ENCODE measurements at regions of chr16 and their contacts with region 1.

Region 1: GRCh38 chr16:24010440-24011089 is 174.8 kb downstream of the PRKCB start:
- DNase-seq: peak; percentile 67 to 86 (median 70)
- H3K4me3 ChIP-seq: no peak overlapping the region
- H3K4me3 Mint-ChIP-seq: peak overlapping the region in 2 of 7 donors; percentile 10 to 42
- H3K27ac ChIP-seq: no peak overlapping the region
- H3K27ac Mint-ChIP-seq: peak overlapping the region in 4 of 8 donors; percentile 32 to 70 (median 62)
- H3K4me1 ChIP-seq: peaks cover 60% of the 10 kb centered on the region
- H3K4me1 Mint-ChIP-seq: peaks cover 64 to 91% (median 85%) of the 10 kb centered on the region in 3 donors
- H3K27me3 ChIP-seq: no peaks in the 10 kb centered on the region
- H3K27me3 Mint-ChIP-seq: no peaks in the 10 kb centered on the region

Region 2: DNA sequence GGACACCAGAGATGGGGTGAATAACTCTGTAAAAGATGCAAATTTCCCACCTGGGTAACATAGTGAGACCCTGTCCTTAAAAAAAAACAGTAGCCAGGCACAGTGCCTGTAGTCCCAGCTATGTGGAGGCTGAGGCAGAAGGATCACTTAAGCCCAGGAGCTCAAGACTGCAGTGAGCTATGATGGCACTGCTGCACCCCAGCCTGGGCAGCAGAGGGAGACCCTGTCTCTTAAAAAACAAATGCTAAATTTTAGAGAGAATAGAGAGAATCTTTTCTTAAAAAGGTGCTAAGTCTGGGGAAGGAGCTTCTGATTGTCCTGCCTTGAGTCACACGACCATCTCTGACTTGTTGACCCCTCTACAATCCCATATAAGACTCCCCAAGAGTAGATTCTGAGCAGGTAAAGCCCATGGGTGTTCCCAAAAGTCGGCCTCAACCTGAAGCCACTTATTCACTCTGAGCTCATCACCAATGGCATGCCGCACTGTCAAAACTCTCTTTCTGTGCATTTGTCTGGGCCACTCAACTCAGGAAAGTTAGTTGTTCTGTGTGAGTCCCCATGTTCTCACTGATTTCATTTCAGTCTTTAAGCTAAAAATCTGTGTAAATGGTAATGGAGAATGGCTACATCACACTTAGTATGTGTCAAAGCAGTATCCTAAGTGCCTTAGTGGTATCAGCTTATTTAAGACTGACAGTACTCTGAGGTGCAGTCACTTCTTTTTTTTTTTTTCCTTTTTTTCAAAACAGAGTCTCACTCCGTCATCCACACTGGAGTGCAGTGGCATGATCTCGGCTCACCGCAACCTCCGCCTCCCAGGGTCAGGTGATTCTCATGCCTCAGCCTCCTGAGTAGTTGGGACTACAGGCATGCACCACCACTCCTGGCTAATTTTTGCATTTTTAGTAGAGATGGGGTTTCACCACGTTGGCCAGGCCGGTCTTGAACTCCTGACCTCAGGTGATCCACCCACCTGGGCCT is 133.2 kb before region 1 on chr16:
- CTCF ChIA-PET with region 1: interaction called, 86 read pairs
- POLR2A ChIA-PET with region 1: interaction called, 5 read pairs
- DNase-seq: peak in 1 of 5 donors; percentile 28
- H3K4me3 ChIP-seq: no peak overlapping the region
- H3K4me3 Mint-ChIP-seq: peak overlapping the region in 1 of 7 donors; percentile 40
- H3K27ac ChIP-seq: no peak overlapping the region
- H3K27ac Mint-ChIP-seq: peak overlapping the region in 7 of 8 donors; percentile 50 to 80 (median 73)
- H3K4me1 ChIP-seq: peaks cover 54% of the 10 kb centered on the region
- H3K4me1 Mint-ChIP-seq: peaks cover 72 to 87% (median 82%) of the 10 kb centered on the region in 3 donors
- H3K27me3 ChIP-seq: no peaks in the 10 kb centered on the region
- H3K27me3 Mint-ChIP-seq: no peaks in the 10 kb centered on the region

Region 3: DNA sequence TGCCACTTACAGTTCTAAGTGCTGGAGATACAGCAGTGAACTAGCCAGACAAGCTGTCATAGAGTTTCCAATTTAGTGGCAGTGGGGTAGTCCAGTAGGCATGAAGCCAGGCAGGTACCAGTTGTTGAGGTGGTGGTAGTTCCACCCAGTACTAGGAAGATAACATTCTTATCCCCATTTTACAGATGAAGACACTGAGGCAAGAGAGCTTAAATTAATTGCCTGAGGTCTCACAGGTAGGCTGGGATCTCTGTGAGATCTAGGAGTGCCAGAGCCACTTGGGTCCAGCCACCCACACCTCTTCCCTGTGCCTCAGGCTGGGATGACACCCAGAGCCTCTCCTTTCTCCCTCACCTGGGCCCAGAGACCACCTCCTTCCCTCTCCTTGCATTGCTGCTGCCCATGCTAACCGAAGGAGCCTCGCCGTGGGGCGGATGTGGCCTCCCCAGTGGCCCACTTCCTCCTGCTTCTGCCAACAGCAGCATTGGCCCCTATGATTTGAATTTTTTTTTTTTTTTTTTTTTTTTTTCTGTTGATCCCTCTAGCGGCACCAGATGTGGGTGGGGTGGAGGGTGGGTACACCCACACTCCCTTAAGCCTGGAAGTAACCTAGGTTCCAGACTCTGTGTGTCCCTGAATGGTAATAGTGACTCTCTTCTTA is 60.8 kb before region 1 on chr16:
- CTCF ChIA-PET with region 1: interaction called, 10 read pairs
- POLR2A ChIA-PET with region 1: interaction called, 4 read pairs
- DNase-seq: peak; percentile 51 to 91 (median 81)
- H3K4me3 ChIP-seq: peak overlapping the region; percentile 39
- H3K4me3 Mint-ChIP-seq: peak overlapping the region; percentile 59 to 88 (median 77)
- H3K27ac ChIP-seq: peak overlapping the region; percentile 49
- H3K27ac Mint-ChIP-seq: peak overlapping the region; percentile 79 to 97 (median 92)
- H3K4me1 ChIP-seq: peaks cover 70% of the 10 kb centered on the region
- H3K4me1 Mint-ChIP-seq: peaks cover 92 to 99% (median 95%) of the 10 kb centered on the region in 3 donors
- H3K27me3 ChIP-seq: no peaks in the 10 kb centered on the region
- H3K27me3 Mint-ChIP-seq: no peaks in the 10 kb centered on the region

Region 4: DNA sequence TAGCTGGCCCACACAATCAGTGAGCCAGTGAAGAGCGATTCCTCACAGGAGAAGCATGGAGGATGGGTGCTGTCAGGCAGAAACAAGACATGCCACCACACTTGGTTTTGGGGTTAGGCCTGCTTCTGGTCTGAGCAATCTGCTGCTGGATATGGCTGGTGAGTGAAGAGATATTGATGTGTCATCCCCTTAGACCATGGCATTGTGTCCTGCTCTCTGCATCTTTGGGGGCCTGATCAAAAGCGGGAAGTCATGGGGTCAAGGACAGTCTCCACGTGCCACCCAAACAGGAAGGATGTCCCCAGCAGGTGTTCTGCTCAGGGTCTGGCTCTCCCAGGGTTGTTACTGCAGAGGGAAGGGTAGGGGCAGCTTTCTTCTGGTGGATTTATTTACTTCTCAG is 34.0 kb before region 1 on chr16:
- CTCF ChIA-PET with region 1: interaction called, 13 read pairs
- POLR2A ChIA-PET with region 1: no interaction called
- DNase-seq: no peak
- H3K4me3 ChIP-seq: no peak overlapping the region
- H3K4me3 Mint-ChIP-seq: peak overlapping the region in 2 of 7 donors; percentile 15 to 39
- H3K27ac ChIP-seq: no peak overlapping the region
- H3K27ac Mint-ChIP-seq: peak overlapping the region in 6 of 8 donors; percentile 29 to 83 (median 42)
- H3K4me1 ChIP-seq: peaks cover 12% of the 10 kb centered on the region
- H3K4me1 Mint-ChIP-seq: peaks cover 62 to 82% (median 75%) of the 10 kb centered on the region in 3 donors
- H3K27me3 ChIP-seq: no peaks in the 10 kb centered on the region
- H3K27me3 Mint-ChIP-seq: peaks cover 0 to 2% of the 10 kb centered on the region in 2 donors

Region 5: GRCh38 chr16:24036614-24037013 is 26.0 kb after region 1 on chr16:
- CTCF ChIA-PET with region 1: interaction called, 21 read pairs
- POLR2A ChIA-PET with region 1: no interaction called
- DNase-seq: peak in 4 of 5 donors; percentile 12 to 50 (median 30)
- H3K4me3 ChIP-seq: no peak overlapping the region
- H3K4me3 Mint-ChIP-seq: peak overlapping the region in 6 of 7 donors; percentile 43 to 96 (median 77)
- H3K27ac ChIP-seq: no peak overlapping the region
- H3K27ac Mint-ChIP-seq: peak overlapping the region in 6 of 8 donors; percentile 11 to 84 (median 62)
- H3K4me1 ChIP-seq: peaks cover 42% of the 10 kb centered on the region
- H3K4me1 Mint-ChIP-seq: peaks cover 48 to 66% (median 61%) of the 10 kb centered on the region in 3 donors
- H3K27me3 ChIP-seq: no peaks in the 10 kb centered on the region
- H3K27me3 Mint-ChIP-seq: no peaks in the 10 kb centered on the region

Region 6: DNA sequence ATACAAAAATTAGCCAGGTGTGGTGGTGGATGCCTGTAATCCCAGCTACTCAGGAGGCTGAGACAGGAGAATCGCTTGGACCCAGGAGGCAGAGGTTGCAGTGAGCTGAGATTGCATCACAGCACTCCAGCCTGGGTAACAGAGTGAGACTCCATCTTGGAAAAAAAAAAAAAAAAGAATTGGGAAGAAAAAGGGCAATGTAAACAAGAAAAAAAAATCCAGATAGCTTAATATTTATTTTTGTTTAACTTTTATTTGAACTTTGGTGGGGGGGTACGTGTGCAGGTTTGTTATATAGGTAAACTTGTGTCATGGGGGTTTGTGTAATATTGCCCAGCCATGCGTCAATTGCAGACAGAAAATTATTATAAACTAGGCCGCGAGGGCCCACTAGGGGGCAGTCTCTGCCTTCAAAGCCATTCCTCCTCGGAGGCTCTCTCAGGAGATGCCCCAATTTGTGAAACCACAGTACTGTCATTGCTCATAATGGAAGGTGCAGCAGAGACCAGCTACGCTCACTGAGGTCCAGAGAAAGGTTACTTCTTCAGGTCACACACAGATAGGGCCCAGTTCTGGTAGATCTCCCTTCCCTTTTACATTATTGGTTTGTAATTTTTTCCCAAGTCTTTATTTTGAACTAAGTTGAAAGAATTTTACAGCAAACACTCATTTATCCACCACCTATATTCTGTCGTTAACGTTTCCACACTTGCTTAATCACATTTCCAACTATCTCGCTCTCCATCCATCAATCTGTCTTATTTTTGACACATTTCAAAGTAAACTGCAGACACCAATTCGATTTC is 31.5 kb after region 1 on chr16:
- CTCF ChIA-PET with region 1: interaction called, 13 read pairs
- POLR2A ChIA-PET with region 1: no interaction called
- DNase-seq: peak; percentile 57 to 81 (median 68)
- H3K4me3 ChIP-seq: no peak overlapping the region
- H3K4me3 Mint-ChIP-seq: no peak overlapping the region
- H3K27ac ChIP-seq: no peak overlapping the region
- H3K27ac Mint-ChIP-seq: peak overlapping the region in 6 of 8 donors; percentile 2 to 63 (median 51)
- H3K4me1 ChIP-seq: no peaks in the 10 kb centered on the region
- H3K4me1 Mint-ChIP-seq: peaks cover 16 to 38% (median 34%) of the 10 kb centered on the region in 3 donors
- H3K27me3 ChIP-seq: no peaks in the 10 kb centered on the region
- H3K27me3 Mint-ChIP-seq: peaks cover 0 to 1% of the 10 kb centered on the region in 2 donors